Activated naive CD4-positive, alpha-beta T cell treated with anti-CD3 and anti-CD28 coated beads for 36 hours (primary cell): ENCODE measurements at regions of chr10 and their contacts with region 1.

Region 1: GRCh38 chr10:61943674-61944410 is 42.3 kb downstream of the ARID5B start:
- DNase-seq: peak; percentile 47
- H3K4me3 Mint-ChIP-seq: peak overlapping the region; percentile 62
- H3K27ac Mint-ChIP-seq: peak overlapping the region; percentile 98
- H3K4me1 Mint-ChIP-seq: peaks cover 71% of the 10 kb centered on the region
- H3K27me3 Mint-ChIP-seq: no peaks in the 10 kb centered on the region

Region 2: DNA sequence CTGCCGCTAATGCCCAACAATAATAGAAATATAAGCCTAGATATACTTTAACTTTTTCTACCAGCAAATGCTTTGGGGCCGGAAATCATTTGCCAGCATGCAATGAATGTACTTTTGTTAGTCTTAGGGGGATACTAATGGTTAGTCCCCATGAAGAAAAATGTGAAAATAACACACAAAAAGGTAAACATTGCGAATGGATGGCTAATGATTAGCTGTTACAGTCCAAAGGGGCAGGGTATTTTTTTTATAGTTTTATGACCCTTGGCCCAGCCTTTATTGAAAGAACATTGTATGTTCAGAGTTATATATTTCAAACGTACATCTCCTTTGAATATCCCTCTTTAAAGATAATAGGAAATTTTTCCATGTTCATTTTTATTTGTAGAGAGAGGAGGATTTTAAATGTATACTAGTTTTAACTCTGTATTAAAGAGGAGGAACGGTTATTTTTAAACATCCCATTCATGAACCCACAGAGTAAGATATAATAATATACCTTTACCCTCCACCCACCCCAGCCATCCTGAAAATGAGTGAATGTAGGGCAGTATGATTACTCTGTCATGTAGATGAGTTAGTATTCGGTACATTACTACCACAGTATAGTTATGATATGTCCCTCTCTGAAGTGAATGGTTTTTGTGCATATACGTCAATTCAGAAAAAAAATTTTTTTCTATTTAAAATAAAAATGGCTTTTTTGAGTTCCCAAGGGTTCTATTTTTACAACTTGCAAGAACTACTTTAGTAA is 21.3 kb after region 1 on chr10:
- CTCF ChIA-PET with region 1: interaction called, 5 read pairs
- intact Hi-C with region 1: loop called (anchors 1 kb)
- DNase-seq: no peak
- H3K4me3 Mint-ChIP-seq: no peak overlapping the region
- H3K27ac Mint-ChIP-seq: peak overlapping the region; percentile 87
- H3K4me1 Mint-ChIP-seq: peaks cover 90% of the 10 kb centered on the region
- H3K27me3 Mint-ChIP-seq: no peaks in the 10 kb centered on the region